ENCODE measurements at regions of chr6 and their contacts with region 1.

Region 1: DNA sequence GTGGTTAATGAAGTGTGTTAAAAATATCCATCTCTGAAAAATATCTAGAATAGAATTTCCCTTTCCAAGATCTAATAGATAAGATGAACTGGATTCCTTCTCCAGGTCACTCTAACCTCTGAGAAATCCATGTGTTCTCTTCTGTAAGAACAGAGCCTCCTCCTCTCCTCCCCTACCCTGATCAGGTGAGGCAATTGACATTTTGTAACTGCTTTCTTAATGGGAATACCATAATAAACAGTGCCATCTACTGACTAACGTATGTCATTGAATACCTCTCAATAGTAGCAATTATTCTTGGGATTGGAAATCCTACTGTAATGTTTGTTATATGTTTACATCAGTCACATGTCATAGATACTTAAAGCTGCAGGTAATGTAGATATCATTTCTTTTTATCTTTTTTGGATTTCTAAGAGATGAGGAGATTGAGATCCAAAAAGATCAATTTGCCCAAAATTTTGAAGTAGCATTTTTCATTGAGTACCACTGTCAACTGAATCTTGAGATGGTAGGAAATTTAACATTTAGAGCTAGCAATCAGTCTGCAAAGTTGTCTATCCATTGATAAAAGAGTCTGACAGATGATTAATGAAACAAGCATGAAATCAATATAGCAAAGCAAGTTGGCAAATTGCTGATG is 365.8 kb upstream of the HSF2 start:
- DNase-seq: peak in 3 of 14 experiments; percentile 27 to 45 (median 40)
- ATAC-seq: peak; percentile 77
- H3K4me3 ChIP-seq: no peak overlapping the region
- H3K4me3 Mint-ChIP-seq: no peak overlapping the region
- H3K27ac ChIP-seq: no peak overlapping the region
- H3K27ac Mint-ChIP-seq: no peak overlapping the region
- H3K4me1 ChIP-seq: no peaks in the 10 kb centered on the region
- H3K4me1 Mint-ChIP-seq: no peaks in the 10 kb centered on the region
- H3K27me3 ChIP-seq: no peaks in the 10 kb centered on the region
- H3K27me3 Mint-ChIP-seq: peaks cover 11% of the 10 kb centered on the region
- CTCF ChIP-seq: peak; percentile 67

Region 2: GRCh38 chr6:121055572-121056163 is 978.0 kb before region 1 on chr6:
- CTCF ChIA-PET with region 1: no interaction called
- POLR2A ChIA-PET with region 1: no interaction called
- intact Hi-C with region 1: loop called (anchors 1 to 2 kb)
- DNase-seq: peak in 3 of 14 experiments; percentile 34 to 54 (median 47)
- ATAC-seq: peak; percentile 39
- H3K4me3 ChIP-seq: no peak overlapping the region
- H3K4me3 Mint-ChIP-seq: no peak overlapping the region
- H3K27ac ChIP-seq: no peak overlapping the region
- H3K27ac Mint-ChIP-seq: no peak overlapping the region
- H3K4me1 ChIP-seq: no peaks in the 10 kb centered on the region
- H3K4me1 Mint-ChIP-seq: no peaks in the 10 kb centered on the region
- H3K27me3 ChIP-seq: no peaks in the 10 kb centered on the region
- H3K27me3 Mint-ChIP-seq: no peaks in the 10 kb centered on the region
- CTCF ChIP-seq: peak; percentile 65

Region 3: DNA sequence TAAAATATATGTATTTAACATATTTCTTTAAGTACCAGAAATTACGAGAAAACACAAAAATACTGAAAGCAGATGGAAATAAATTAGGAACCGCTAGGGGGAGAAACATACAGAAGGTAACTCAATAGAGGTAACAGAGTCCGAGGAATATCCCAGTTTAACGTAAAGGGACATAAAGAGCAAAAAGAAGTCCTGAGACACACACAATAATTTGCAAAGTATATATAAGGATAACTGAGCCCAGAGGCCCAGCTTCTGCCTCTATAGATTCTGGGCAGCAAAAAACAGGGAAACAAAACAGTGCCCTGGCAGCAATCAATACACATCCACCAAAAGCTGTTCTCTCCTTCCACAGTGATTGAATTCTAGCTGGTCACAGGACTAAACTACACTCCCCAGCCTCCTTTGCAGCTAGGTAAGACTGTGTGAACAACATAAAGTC is 714.5 kb before region 1 on chr6:
- CTCF ChIA-PET with region 1: no interaction called
- POLR2A ChIA-PET with region 1: no interaction called
- intact Hi-C with region 1: loop called in 1 of 2 experiments (anchors 10 kb)
- DNase-seq: peak in 3 of 14 experiments; percentile 2 to 25 (median 11)
- ATAC-seq: no peak
- H3K4me3 ChIP-seq: no peak overlapping the region
- H3K4me3 Mint-ChIP-seq: no peak overlapping the region
- H3K27ac ChIP-seq: no peak overlapping the region
- H3K27ac Mint-ChIP-seq: no peak overlapping the region
- H3K4me1 ChIP-seq: no peaks in the 10 kb centered on the region
- H3K4me1 Mint-ChIP-seq: no peaks in the 10 kb centered on the region
- H3K27me3 ChIP-seq: no peaks in the 10 kb centered on the region
- H3K27me3 Mint-ChIP-seq: no peaks in the 10 kb centered on the region
- CTCF ChIP-seq: peak; percentile 53

Region 4: GRCh38 chr6:121354764-121355163 is 678.9 kb before region 1 on chr6:
- CTCF ChIA-PET with region 1: no interaction called
- POLR2A ChIA-PET with region 1: no interaction called
- intact Hi-C with region 1: loop called in 1 of 2 experiments (anchors 1 kb)
- DNase-seq: no peak
- ATAC-seq: no peak
- H3K4me3 ChIP-seq: no peak overlapping the region
- H3K4me3 Mint-ChIP-seq: no peak overlapping the region
- H3K27ac ChIP-seq: no peak overlapping the region
- H3K27ac Mint-ChIP-seq: no peak overlapping the region
- H3K4me1 ChIP-seq: no peaks in the 10 kb centered on the region
- H3K4me1 Mint-ChIP-seq: no peaks in the 10 kb centered on the region
- H3K27me3 ChIP-seq: peaks cover 0 to 11% of the 10 kb centered on the region in 2 experiments
- H3K27me3 Mint-ChIP-seq: peaks cover 38% of the 10 kb centered on the region
- CTCF ChIP-seq: peak; percentile 33

Region 5: GRCh38 chr6:121430514-121431460 is 602.9 kb before region 1 on chr6:
- CTCF ChIA-PET with region 1: no interaction called
- POLR2A ChIA-PET with region 1: no interaction called
- intact Hi-C with region 1: loop called (anchors 2 to 10 kb)
- DNase-seq: no peak
- ATAC-seq: no peak
- H3K4me3 ChIP-seq: no peak overlapping the region
- H3K4me3 Mint-ChIP-seq: no peak overlapping the region
- H3K27ac ChIP-seq: no peak overlapping the region
- H3K27ac Mint-ChIP-seq: no peak overlapping the region
- H3K4me1 ChIP-seq: no peaks in the 10 kb centered on the region
- H3K4me1 Mint-ChIP-seq: peaks cover 9% of the 10 kb centered on the region
- H3K27me3 ChIP-seq: no peaks in the 10 kb centered on the region
- H3K27me3 Mint-ChIP-seq: peaks cover 4% of the 10 kb centered on the region
- CTCF ChIP-seq: peak; percentile 45